WTC11 (cell line): ENCODE measurements at regions of chr6 and their contacts with region 1.

Region 1: DNA sequence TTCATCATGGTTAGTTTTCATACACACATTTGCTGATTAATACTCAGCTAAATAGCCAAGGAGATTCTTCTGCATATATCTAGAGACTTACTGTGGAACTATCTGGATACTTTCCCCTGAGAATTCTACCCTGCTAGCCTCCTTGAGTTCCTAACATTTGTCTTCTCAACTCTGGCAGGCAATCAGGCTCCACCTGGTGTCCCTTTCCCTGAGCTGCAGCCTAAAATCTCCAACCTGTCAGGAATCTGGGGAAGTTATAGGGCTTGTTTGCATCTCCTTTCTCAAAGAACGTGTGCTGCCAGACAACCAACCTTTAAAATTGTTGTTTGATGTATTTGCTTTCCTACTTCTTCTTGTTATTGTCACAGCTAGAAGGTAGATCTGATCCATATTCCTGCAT is 73.4 kb downstream of the FUT9 start:
- DNase-seq: peak; percentile 62
- ATAC-seq: peak; percentile 94
- H3K4me3 Mint-ChIP-seq: no peak overlapping the region
- H3K27ac Mint-ChIP-seq: no peak overlapping the region
- H3K4me1 Mint-ChIP-seq: 0 out of 2 replicates have a peak, but pooled peaks cover 3% of the 10 kb centered on the region
- H3K27me3 Mint-ChIP-seq: no peaks in the 10 kb centered on the region
- CTCF ChIP-seq: peak; percentile 30; the same call in 1 of the 2 replicates

Region 2: GRCh38 chr6:96015518-96016333 is 73.4 kb before region 1 on chr6 and contains the start of gene FUT9:
- CTCF ChIA-PET with region 1: interaction called, 12 read pairs
- POLR2A ChIA-PET with region 1: no interaction called
- DNase-seq: peak; percentile 85
- ATAC-seq: peak; percentile 82
- H3K4me3 Mint-ChIP-seq: peak within 1 kb of the TSS; percentile 99
- H3K27ac Mint-ChIP-seq: peak within 1 kb of the TSS; percentile 91
- H3K4me1 Mint-ChIP-seq: peaks cover 39% of the 10 kb centered on the region
- H3K27me3 Mint-ChIP-seq: peaks cover 17% of the 10 kb centered on the region
- CTCF ChIP-seq: no peak
- total RNA-seq, gene FUT9: 3.5 to 3.9 TPM (median 3.6 TPM) in 3 replicates

Region 3: DNA sequence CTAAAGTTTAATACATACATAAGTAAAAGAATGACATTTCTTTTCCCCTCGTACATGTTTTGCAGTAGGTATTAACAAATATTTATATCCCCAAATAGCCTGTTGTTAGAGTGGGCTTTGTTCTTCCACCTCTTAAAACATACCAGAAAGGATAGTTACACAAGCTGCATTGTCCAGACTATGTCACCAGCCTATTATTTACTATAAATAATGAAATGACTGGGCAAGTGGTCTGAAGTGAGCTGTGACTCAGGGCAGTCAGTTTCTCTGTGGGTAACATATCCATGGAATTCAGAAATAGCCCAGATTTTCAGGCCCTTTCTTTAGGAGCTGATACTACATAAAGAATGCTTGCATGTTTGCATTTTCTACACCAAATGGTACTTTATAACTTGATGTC is 13.3 kb before region 1 on chr6:
- CTCF ChIA-PET with region 1: no interaction called
- POLR2A ChIA-PET with region 1: interaction called, 10 read pairs
- DNase-seq: no peak
- ATAC-seq: no peak
- H3K4me3 Mint-ChIP-seq: no peak overlapping the region
- H3K27ac Mint-ChIP-seq: no peak overlapping the region
- H3K4me1 Mint-ChIP-seq: peaks cover 5% of the 10 kb centered on the region
- H3K27me3 Mint-ChIP-seq: no peaks in the 10 kb centered on the region
- CTCF ChIP-seq: no peak